Left ventricle myocardium superior (tissue), 1 donor: ENCODE measurements at regions of chr18 and their contacts with region 1.

Region 1: GRCh38 chr18:45935591-45936335 is 31.4 kb downstream of the EPG5 start:
- DNase-seq: no peak
- ATAC-seq: no peak

Region 2: DNA sequence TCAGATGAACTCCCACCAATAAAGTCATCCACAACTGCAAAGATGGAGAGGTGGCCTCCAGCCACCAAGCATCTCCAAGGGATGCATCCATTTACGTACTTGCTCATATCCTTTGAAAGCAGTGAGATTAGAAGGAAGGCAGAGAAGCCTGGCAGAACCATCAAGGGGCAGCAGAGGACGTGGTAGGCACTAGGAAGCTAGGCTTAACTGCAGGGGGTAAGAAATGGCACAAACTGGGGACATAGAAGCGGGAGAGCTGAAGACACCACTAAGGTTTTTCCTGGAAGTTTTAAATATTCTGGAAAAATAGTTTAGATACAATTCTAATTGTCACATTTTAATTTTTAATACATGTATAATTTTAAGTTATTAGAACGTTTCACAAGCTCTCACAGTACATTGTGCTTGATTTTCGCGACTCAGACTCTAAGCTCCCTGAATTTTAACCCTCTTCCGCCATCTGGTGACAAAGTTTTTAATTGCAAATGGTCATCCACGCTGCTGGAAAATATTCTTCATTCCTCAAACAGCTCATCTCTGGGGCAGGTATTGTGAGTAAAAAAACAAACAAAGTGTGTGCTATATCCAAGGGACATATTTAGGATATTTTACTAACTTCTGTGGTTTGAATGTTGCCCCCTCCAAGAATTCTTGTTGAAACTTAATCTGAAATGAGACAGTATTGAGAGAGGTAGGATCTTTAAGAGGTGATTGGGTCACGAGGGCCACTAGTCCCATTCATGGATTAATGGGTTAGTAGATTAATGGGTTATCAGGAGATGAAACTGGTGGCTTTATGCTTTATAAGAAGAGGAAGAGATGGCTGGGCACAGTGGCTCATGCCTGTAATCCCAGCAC is 137.9 kb after region 1 on chr18:
- intact Hi-C with region 1: loop called (anchors 10 kb)
- DNase-seq: no peak
- ATAC-seq: peak; percentile 38